ENCODE measurements at regions of chr19 and their contacts with region 1.

Region 1: DNA sequence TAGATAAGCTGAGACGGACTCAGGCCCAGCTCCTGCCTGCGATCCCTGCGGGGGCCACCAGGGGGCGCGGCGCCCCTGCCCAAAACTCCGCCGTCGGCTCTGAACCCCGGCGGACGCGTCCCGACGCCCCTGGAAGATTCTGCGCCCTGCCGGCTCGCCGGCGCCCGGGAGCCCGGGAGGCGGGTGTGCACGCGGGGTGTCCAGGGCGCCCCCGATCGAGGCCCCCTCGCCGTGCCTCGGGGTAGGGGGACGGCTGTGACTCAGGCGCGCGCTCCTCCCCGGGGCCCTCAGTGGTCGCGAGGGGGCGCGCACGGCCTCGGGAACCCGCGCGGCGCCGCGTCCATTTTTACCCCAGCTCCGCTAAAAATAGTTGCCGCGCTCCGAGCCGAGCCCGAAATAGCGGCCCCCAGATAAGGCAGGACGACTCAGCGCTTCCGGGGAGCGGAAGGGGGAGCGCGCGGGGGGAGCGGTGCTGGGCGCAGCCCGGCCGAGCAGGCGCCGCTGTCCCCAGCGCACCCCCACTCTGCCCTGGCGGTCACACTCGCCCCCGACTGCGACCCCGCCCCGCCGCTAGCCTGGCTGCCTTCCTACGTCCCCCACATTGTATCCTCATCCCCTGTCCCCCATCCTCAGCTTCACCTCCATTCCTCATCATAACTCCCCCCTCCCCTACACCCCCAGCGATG is 16.0 kb upstream of the ERCC1 start:
- DNase-seq: peak; percentile 79
- ATAC-seq: peak; percentile 7
- H3K4me3 Mint-ChIP-seq: peak overlapping the region; percentile 69
- H3K27ac Mint-ChIP-seq: no peak overlapping the region
- H3K4me1 Mint-ChIP-seq: peaks cover 26% of the 10 kb centered on the region
- H3K27me3 Mint-ChIP-seq: peaks cover 27% of the 10 kb centered on the region
- CTCF ChIP-seq: peak; percentile 100

Region 2: GRCh38 chr19:45405435-45406225 is 34.1 kb before region 1 on chr19:
- CTCF ChIA-PET with region 1: interaction called, 14 read pairs
- POLR2A ChIA-PET with region 1: no interaction called
- DNase-seq: peak; percentile 93
- ATAC-seq: peak; percentile 32
- H3K4me3 Mint-ChIP-seq: peak overlapping the region; percentile 96
- H3K27ac Mint-ChIP-seq: peak overlapping the region; percentile 99
- H3K4me1 Mint-ChIP-seq: peaks cover 23% of the 10 kb centered on the region
- H3K27me3 Mint-ChIP-seq: peaks cover 7% of the 10 kb centered on the region; the same call in 1 of the 2 replicates
- CTCF ChIP-seq: no peak

Region 3: GRCh38 chr19:45455707-45456499 is 16.2 kb after region 1 on chr19:
- CTCF ChIA-PET with region 1: interaction called, 21 read pairs
- POLR2A ChIA-PET with region 1: no interaction called
- DNase-seq: peak; percentile 78
- ATAC-seq: peak; percentile 93
- H3K4me3 Mint-ChIP-seq: no peak overlapping the region
- H3K27ac Mint-ChIP-seq: peak overlapping the region; percentile 78
- H3K4me1 Mint-ChIP-seq: peaks cover 14% of the 10 kb centered on the region
- H3K27me3 Mint-ChIP-seq: peaks cover 37% of the 10 kb centered on the region
- CTCF ChIP-seq: no peak

Region 4: GRCh38 chr19:45478454-45479238 is 38.9 kb after region 1 on chr19:
- CTCF ChIA-PET with region 1: interaction called, 325 read pairs
- POLR2A ChIA-PET with region 1: interaction called, 28 read pairs
- DNase-seq: peak; percentile 90
- ATAC-seq: peak; percentile 94
- H3K4me3 Mint-ChIP-seq: peak overlapping the region; percentile 69
- H3K27ac Mint-ChIP-seq: peak overlapping the region; percentile 99
- H3K4me1 Mint-ChIP-seq: peaks cover 23% of the 10 kb centered on the region
- H3K27me3 Mint-ChIP-seq: peaks cover 47% of the 10 kb centered on the region
- CTCF ChIP-seq: peak; percentile 90

Region 5: DNA sequence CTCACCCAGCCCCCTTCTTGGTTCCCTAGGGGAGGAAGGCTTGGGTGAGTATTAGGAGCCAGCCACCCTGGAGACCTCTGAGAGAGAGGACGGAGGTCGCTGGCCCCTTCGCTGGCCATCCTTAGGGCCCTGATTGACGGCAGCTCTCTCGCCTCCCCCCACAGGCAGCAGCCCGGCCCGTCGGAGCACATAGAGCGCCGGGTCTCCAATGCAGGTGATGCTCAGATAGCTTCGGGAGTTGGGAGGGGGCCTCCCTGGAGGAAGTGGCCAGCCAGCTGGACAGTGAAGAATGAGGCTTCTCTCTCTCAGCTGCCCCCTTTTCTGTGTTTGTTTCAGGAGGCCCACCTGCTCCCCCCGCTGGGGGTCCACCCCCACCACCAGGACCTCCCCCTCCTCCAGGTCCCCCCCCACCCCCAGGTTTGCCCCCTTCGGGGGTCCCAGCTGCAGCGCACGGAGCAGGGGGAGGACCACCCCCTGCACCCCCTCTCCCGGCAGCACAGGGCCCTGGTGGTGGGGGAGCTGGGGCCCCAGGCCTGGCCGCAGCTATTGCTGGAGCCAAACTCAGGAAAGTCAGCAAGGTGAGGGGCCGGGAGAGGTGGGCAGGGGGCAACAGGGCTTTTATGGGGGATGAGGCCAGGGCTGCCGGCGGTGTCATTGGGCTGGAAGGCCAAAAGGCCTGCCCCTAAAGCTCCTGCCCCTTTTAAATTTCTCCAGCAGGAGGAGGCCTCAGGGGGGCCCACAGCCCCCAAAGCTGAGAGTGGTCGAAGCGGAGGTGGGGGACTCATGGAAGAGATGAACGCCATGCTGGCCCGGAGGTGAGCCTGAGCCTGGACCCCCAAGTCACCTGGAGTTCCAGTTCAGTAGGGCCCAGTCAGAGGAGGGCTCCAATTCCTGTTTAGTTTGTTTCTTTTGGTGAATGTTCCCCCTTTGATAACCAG is 82.6 kb after region 1 on chr19:
- CTCF ChIA-PET with region 1: no interaction called
- POLR2A ChIA-PET with region 1: no interaction called
- DNase-seq: no peak
- ATAC-seq: no peak
- H3K4me3 Mint-ChIP-seq: no peak overlapping the region
- H3K27ac Mint-ChIP-seq: no peak overlapping the region; the same call in 1 of the 2 replicates
- H3K4me1 Mint-ChIP-seq: peaks cover 7% of the 10 kb centered on the region; the same call in 1 of the 2 replicates
- H3K27me3 Mint-ChIP-seq: no peaks in the 10 kb centered on the region
- CTCF ChIP-seq: no peak

Region 6: GRCh38 chr19:45591004-45591637 is 151.4 kb after region 1 on chr19:
- CTCF ChIA-PET with region 1: interaction called, 11 read pairs
- POLR2A ChIA-PET with region 1: no interaction called
- DNase-seq: peak; percentile 84
- ATAC-seq: peak; percentile 95
- H3K4me3 Mint-ChIP-seq: no peak overlapping the region
- H3K27ac Mint-ChIP-seq: no peak overlapping the region
- H3K4me1 Mint-ChIP-seq: peaks cover 6% of the 10 kb centered on the region
- H3K27me3 Mint-ChIP-seq: peaks cover 60% of the 10 kb centered on the region
- CTCF ChIP-seq: no peak

Region 7: GRCh38 chr19:45863843-45864628 is 424.3 kb after region 1 on chr19 and contains the start of gene FOXA3:
- CTCF ChIA-PET with region 1: no interaction called
- POLR2A ChIA-PET with region 1: no interaction called
- DNase-seq: peak; percentile 77
- ATAC-seq: peak; percentile 35
- H3K4me3 Mint-ChIP-seq: peak within 1 kb of the TSS; percentile 99
- H3K27ac Mint-ChIP-seq: peak within 1 kb of the TSS; percentile 84
- H3K4me1 Mint-ChIP-seq: peaks cover 43% of the 10 kb centered on the region
- H3K27me3 Mint-ChIP-seq: no peaks in the 10 kb centered on the region
- CTCF ChIP-seq: peak; percentile 62
- total RNA-seq, gene FOXA3: 20.7 to 24.6 TPM (median 24.2 TPM) in 3 replicates

Measured in WTC11 (cell line).